H1 (cell line): ENCODE measurements at regions of chr10 and their contacts with region 1.

Region 1: DNA sequence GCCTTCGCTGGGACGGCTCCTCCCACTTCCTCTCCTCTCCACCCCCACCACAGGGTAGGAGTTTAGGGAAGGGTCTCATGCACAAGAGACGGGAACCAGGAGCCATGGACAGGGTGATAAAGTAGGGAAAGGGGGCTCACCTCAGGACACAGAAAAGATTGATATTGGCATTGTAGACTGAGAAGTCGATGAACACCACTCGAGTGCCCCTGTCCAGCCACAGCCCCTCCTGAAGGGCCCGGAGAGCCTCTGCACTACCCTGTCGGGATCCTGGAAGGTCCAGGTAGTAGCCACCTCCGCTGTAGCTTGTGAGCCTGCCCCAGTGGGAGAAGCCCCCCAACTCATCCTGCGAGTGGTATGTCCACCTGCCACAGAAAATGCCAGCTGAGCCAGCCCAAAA is 10.8 kb upstream of the BLOC1S2 start:
- DNase-seq: no peak
- H3K4me3 ChIP-seq: no peak overlapping the region
- H3K27ac ChIP-seq: no peak overlapping the region
- H3K4me1 ChIP-seq: peaks cover 0 to 12% (median 7%) of the 10 kb centered on the region in 4 experiments; a peak in 4 of 7 replicates
- H3K27me3 ChIP-seq: no peaks in the 10 kb centered on the region
- CTCF ChIP-seq: no peak
- EP300 ChIP-seq: no peak
- POLR2A ChIP-seq: no peak
- RAD21 ChIP-seq: no peak

Region 2: GRCh38 chr10:100265821-100266485 is 31.3 kb before region 1 on chr10:
- CTCF ChIA-PET with region 1: no interaction called
- POLR2A ChIA-PET with region 1: no interaction called
- DNase-seq: no peak
- H3K4me3 ChIP-seq: peak overlapping the region in 1 of 4 experiments; percentile 98; a peak in 2 of 8 replicates
- H3K27ac ChIP-seq: no peak overlapping the region
- H3K4me1 ChIP-seq: peaks cover 0 to 3% (median 0%) of the 10 kb centered on the region in 4 experiments; a peak in 4 of 7 replicates
- H3K27me3 ChIP-seq: no peaks in the 10 kb centered on the region
- CTCF ChIP-seq: no peak
- EP300 ChIP-seq: no peak
- POLR2A ChIP-seq: no peak
- RAD21 ChIP-seq: no peak

Region 3: DNA sequence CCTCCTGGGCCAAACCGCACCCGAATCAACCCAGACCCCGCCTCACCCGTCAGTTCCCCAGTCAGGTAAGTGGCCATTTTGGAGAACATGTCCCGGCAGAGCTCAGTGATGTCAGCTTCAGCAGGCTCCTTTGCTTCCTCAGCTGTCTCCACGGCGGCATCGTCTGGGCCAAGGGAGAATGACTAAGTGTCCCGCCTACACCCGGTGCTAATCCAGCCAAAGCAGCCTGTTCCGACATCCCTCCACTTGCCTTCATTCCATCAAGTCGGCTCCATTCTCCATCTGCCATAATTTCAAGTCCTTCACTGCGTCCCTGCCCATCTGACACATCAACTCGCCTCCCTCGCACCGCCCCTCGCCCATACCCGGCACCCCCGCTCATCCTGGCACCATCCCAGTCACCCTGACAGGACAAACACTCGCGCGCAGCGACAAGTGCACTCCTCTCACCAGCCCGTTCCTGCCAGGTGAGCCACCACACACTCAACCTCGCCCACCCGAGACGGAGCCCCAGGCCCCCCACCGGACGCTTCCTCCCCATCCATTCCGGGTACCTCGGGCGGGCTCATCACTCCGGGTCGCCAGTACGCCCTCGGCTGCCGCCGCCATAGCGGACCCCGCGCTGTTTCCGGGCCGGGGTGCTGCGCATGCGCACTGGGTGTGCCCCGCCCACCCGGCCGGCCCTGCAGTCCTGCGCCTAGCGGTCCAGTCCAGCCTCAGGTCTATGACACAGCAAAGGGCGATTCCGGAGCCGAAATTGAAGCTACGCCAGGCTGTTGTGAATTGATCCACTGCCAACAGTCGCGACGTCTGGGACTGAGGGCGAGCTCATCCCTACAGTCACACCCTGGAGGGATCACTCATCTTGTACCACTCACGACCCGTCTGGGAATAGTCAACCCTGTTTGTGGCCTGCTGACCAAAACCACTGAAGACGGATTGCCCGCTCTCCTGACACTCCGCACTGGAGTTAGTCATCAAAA is 10.9 kb before region 1 on chr10 and contains the start of gene BLOC1S2:
- CTCF ChIA-PET with region 1: interaction called, 6 read pairs
- POLR2A ChIA-PET with region 1: interaction called, 20 read pairs
- DNase-seq: peak; percentile 64 to 95
- H3K4me3 ChIP-seq: peak within 1 kb of the TSS; percentile 64 to 98 (median 88)
- H3K27ac ChIP-seq: peak within 1 kb of the TSS; percentile 72
- H3K4me1 ChIP-seq: peaks cover 0 to 8% (median 4%) of the 10 kb centered on the region in 4 experiments; a peak in 4 of 7 replicates
- H3K27me3 ChIP-seq: no peaks in the 10 kb centered on the region
- CTCF ChIP-seq: no peak
- EP300 ChIP-seq: no peak
- POLR2A ChIP-seq: peak; percentile 28 to 71
- RAD21 ChIP-seq: no peak
- total RNA-seq, gene BLOC1S2: 46.5 and 50.6 TPM in 2 replicates

Region 4: DNA sequence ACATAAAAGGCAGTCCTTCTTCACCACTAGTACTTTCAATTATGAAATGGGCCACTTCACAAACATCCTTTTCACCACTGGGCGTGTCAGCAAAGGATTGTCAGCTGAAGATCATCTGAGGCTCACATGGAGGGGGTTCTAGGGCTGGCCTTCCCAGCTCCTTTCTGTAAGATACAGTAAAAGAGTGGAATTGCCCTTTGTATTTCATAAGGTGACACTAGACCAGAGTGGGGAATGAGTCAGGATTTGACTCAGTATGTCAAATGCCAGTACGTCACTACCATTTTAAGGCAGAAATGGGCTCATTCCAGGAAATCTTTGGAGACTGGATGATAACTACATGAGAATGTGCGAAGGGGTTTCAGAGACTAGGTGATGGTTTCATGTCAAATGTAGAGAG is 10.5 kb after region 1 on chr10:
- CTCF ChIA-PET with region 1: no interaction called
- POLR2A ChIA-PET with region 1: no interaction called
- DNase-seq: no peak
- H3K4me3 ChIP-seq: no peak overlapping the region
- H3K27ac ChIP-seq: no peak overlapping the region
- H3K4me1 ChIP-seq: no peaks in the 10 kb centered on the region; a peak in 1 of 7 replicates
- H3K27me3 ChIP-seq: no peaks in the 10 kb centered on the region; a peak in 1 of 7 replicates
- CTCF ChIP-seq: no peak
- EP300 ChIP-seq: no peak
- POLR2A ChIP-seq: no peak
- RAD21 ChIP-seq: no peak

Region 5: DNA sequence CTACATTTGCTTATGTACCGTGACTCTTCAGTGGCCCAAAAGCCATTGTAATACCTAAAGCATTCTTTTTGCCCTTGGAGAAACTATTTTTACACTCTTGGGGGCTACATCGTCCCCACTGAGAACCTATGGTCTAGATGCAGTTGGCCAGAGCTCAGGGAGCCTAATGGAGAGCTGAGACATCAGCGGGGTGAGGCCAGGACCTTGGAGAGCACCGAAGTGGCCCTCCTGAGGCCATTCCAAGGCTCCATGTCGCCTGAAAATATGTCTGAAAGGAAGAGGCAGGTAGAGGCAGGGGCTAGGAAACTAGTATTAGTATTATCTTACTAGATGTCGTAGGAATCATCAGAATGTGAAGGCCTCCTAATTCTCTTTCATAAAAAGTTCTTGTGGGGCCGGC is 27.9 kb after region 1 on chr10:
- CTCF ChIA-PET with region 1: no interaction called
- POLR2A ChIA-PET with region 1: no interaction called
- DNase-seq: peak in 1 of 2 experiments; percentile 75
- H3K4me3 ChIP-seq: no peak overlapping the region
- H3K27ac ChIP-seq: no peak overlapping the region
- H3K4me1 ChIP-seq: no peaks in the 10 kb centered on the region
- H3K27me3 ChIP-seq: no peaks in the 10 kb centered on the region; a peak in 3 of 7 replicates
- CTCF ChIP-seq: no peak
- EP300 ChIP-seq: no peak
- POLR2A ChIP-seq: no peak
- RAD21 ChIP-seq: no peak

Region 6: DNA sequence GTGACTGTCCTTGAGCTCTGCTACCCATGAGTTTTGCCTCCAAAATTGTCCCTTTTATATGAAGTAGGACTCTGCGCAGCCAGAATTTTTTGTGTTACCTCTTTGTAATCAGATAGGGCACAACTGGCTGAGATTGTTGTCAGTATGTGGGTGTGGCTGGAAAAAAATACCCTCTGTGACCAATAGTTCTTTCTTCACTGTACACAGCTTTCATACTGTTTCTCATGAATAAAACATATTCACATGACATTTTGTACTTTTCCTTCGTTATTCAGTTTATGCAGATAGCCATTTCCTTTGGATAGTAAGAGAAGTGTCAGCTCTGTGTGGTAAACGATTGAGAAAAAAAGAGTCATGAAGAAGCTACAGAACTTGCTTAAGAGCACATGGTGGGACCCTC is 115.9 kb after region 1 on chr10:
- CTCF ChIA-PET with region 1: no interaction called
- POLR2A ChIA-PET with region 1: no interaction called
- DNase-seq: no peak
- H3K4me3 ChIP-seq: no peak overlapping the region
- H3K27ac ChIP-seq: no peak overlapping the region
- H3K4me1 ChIP-seq: no peaks in the 10 kb centered on the region
- H3K27me3 ChIP-seq: no peaks in the 10 kb centered on the region; a peak in 1 of 7 replicates
- CTCF ChIP-seq: no peak
- EP300 ChIP-seq: no peak
- POLR2A ChIP-seq: no peak
- RAD21 ChIP-seq: no peak